Ovary (tissue), 10 donors: ENCODE measurements at regions of chr16 and their contacts with region 1.

Region 1: DNA sequence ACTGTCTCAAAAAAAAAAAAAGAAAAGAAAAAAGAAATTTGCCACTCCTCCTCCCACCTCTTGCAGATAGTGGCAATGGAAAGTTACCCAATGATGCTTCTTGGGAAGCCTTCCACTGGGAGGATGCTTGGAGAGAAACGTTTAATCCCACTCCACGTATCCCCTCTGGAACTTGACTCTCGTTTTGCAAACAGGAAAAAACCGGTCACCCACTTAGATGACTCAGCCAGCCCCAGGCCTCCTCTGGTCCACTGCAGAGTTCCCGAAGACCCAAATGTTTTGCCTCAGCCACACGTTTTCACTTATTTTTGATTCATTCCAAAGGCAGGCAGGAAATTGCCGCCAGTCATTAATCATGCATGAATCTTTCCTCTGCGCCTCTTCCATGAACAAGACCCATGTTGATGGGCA is 9.3 kb upstream of the TNFRSF17 start:
- DNase-seq: no peak
- H3K4me3 ChIP-seq: no peak overlapping the region
- H3K27ac ChIP-seq: no peak overlapping the region
- H3K4me1 ChIP-seq: no peaks in the 10 kb centered on the region
- H3K27me3 ChIP-seq: no peaks in the 10 kb centered on the region
- CTCF ChIP-seq: no peak
- EP300 ChIP-seq: no peak
- POLR2A ChIP-seq: no peak

Region 2: DNA sequence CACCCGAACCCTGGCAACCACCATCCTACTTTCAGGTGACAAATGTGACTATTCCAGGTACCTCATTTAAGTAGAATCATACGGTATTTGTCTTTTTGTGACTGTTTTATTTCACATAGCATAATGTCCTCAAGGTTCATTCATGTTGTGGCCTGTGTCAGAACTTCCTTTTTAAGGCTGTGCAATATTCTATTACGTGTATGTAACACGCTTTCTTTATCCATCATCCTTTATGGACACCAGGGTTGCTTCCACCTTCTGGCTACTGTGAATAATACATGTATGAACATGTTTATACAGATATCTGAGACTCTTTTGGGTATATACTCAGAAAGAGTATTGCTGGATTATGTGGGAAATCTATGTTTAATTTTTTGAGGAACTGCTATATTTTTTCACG is 75.7 kb before region 1 on chr16:
- intact Hi-C with region 1: no loop called
- DNase-seq: no peak
- H3K4me3 ChIP-seq: no peak overlapping the region
- H3K27ac ChIP-seq: no peak overlapping the region
- H3K4me1 ChIP-seq: no peaks in the 10 kb centered on the region
- H3K27me3 ChIP-seq: no peaks in the 10 kb centered on the region
- CTCF ChIP-seq: no peak
- EP300 ChIP-seq: no peak
- POLR2A ChIP-seq: no peak

Region 3: GRCh38 chr16:12420653-12421209 is 465.0 kb after region 1 on chr16:
- intact Hi-C with region 1: no loop called
- DNase-seq: no peak
- H3K4me3 ChIP-seq: no peak overlapping the region
- H3K27ac ChIP-seq: no peak overlapping the region
- H3K4me1 ChIP-seq: peaks cover 2% of the 10 kb centered on the region
- H3K27me3 ChIP-seq: no peaks in the 10 kb centered on the region
- CTCF ChIP-seq: no peak
- EP300 ChIP-seq: no peak
- POLR2A ChIP-seq: no peak

Region 4: DNA sequence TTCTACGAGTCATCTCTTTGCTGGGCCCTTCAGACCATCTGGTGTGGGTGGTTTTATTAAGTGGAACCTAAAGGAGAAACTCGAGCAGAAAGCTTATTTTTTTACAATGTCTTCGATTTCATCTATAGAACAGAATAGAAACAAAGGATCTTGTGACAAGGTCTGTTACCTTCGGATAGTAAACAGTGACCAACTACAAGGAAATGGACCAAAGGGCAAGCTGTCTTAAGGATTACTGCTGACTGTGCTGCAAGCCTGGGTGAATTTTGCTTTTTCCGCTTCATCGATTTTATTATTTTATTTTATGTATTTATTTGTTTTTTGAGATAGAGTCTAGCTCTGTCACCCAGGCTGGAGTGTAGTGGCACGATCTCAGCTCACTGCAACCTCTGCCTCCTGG is 1615.3 kb after region 1 on chr16:
- intact Hi-C with region 1: loop called in 1 of 4 experiments (anchors 5 kb)
- DNase-seq: no peak
- H3K4me3 ChIP-seq: no peak overlapping the region
- H3K27ac ChIP-seq: no peak overlapping the region
- H3K4me1 ChIP-seq: no peaks in the 10 kb centered on the region
- H3K27me3 ChIP-seq: no peaks in the 10 kb centered on the region
- CTCF ChIP-seq: no peak
- EP300 ChIP-seq: no peak
- POLR2A ChIP-seq: no peak